Activated naive CD4-positive, alpha-beta T cell treated with anti-CD3 and anti-CD28 coated beads for 36 hours (primary cell): ENCODE measurements at regions of chr5 and their contacts with region 1.

Region 1: DNA sequence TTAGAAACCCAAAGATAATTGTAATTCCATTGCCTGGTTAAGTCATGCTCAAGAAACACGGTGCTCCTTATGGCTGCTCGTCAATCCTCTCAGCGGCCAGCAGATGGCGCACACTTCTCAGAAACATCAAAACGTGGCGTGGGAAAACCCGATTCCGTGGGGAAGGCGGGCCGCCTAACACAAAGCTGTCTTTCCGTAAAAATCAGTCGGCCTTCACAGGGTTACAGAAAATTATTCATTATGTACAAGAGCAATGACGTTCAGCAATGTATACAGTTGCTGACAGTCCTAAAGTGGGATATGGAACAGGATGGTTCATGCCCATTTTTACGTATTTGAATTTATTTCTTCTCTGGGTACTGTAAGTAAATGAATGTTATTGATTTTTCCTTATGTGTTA is 83.5 kb downstream of the PDE4D start:
- DNase-seq: peak; percentile 73
- H3K4me3 Mint-ChIP-seq: no peak overlapping the region
- H3K27ac Mint-ChIP-seq: no peak overlapping the region
- H3K4me1 Mint-ChIP-seq: no peaks in the 10 kb centered on the region
- H3K27me3 Mint-ChIP-seq: peaks cover 10% of the 10 kb centered on the region

Region 2: DNA sequence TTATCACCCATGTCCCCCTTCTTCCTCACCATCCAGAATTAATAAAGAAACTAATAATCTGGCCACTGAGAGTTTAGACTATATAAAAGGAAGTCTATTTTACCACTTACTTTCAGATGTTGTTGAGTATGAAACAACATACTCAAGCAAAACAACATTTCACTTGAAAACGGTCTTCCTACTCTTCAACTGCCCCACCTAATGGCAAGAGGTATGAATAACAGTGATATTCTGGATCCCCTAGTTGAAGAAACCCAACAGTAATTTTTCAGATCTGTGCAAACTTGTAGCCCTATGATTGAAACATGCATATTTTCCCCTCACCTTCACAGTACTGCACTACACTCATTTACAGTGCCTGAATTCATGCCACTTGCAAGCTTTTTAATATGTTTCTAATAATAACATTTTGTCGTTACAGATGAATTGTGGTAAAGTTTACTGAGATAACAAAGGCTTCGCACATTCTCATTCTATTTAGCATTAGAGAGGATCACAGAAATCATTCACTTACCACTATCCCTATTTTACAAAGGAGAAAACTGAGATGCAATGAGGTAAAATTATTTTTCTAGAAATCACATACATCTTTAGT is 351.4 kb after region 1 on chr5:
- CTCF ChIA-PET with region 1: interaction called, 3 read pairs
- intact Hi-C with region 1: loop called (anchors 1 kb)
- DNase-seq: no peak
- H3K4me3 Mint-ChIP-seq: no peak overlapping the region
- H3K27ac Mint-ChIP-seq: no peak overlapping the region
- H3K4me1 Mint-ChIP-seq: no peaks in the 10 kb centered on the region
- H3K27me3 Mint-ChIP-seq: no peaks in the 10 kb centered on the region

Region 3: GRCh38 chr5:60287174-60287771 is 477.2 kb after region 1 on chr5:
- CTCF ChIA-PET with region 1: no interaction called
- intact Hi-C with region 1: loop called (anchors 2 kb)
- DNase-seq: peak; percentile 14
- H3K4me3 Mint-ChIP-seq: no peak overlapping the region
- H3K27ac Mint-ChIP-seq: no peak overlapping the region
- H3K4me1 Mint-ChIP-seq: no peaks in the 10 kb centered on the region
- H3K27me3 Mint-ChIP-seq: no peaks in the 10 kb centered on the region

Region 4: GRCh38 chr5:60382716-60383115 is 572.7 kb after region 1 on chr5:
- CTCF ChIA-PET with region 1: no interaction called
- intact Hi-C with region 1: loop called (anchors 1 kb)
- DNase-seq: no peak
- H3K4me3 Mint-ChIP-seq: no peak overlapping the region
- H3K27ac Mint-ChIP-seq: no peak overlapping the region
- H3K4me1 Mint-ChIP-seq: no peaks in the 10 kb centered on the region
- H3K27me3 Mint-ChIP-seq: no peaks in the 10 kb centered on the region

Region 5: DNA sequence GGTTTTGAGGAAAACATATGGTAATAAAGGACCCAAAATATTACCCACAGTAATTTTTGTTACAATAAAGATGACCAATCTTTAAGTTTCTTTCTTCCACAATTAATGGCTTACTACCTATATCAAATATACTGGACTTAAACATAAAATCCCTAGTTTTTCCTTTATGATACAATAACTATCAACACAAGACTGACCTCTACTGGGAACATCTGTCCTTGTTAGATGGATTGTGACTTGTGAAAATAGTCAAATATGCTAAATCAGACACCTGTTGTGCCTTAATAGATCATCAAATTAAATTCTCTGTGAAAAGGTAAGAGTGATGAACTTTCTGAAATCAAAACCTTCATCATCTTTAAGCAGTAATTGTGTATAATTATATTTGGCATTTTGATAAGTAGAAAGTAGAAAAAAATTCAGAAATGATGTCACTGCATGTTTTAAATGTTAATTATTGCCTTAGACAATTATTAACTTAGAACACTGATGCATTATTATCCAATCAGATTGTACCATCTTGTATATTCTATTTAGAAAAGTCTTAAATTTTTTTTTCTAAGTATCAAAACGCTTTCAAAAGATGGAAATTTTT is 776.4 kb after region 1 on chr5:
- CTCF ChIA-PET with region 1: no interaction called
- intact Hi-C with region 1: loop called (anchors 5 kb)
- DNase-seq: no peak
- H3K4me3 Mint-ChIP-seq: no peak overlapping the region
- H3K27ac Mint-ChIP-seq: no peak overlapping the region
- H3K4me1 Mint-ChIP-seq: no peaks in the 10 kb centered on the region
- H3K27me3 Mint-ChIP-seq: peaks cover 6% of the 10 kb centered on the region

Region 6: GRCh38 chr5:60649283-60649917 is 839.4 kb after region 1 on chr5:
- CTCF ChIA-PET with region 1: no interaction called
- intact Hi-C with region 1: loop called (anchors 1 kb)
- DNase-seq: no peak
- H3K4me3 Mint-ChIP-seq: no peak overlapping the region
- H3K27ac Mint-ChIP-seq: no peak overlapping the region
- H3K4me1 Mint-ChIP-seq: no peaks in the 10 kb centered on the region
- H3K27me3 Mint-ChIP-seq: no peaks in the 10 kb centered on the region

Region 7: GRCh38 chr5:60668686-60669304 is 858.8 kb after region 1 on chr5:
- CTCF ChIA-PET with region 1: no interaction called
- intact Hi-C with region 1: loop called (anchors 1 kb)
- DNase-seq: no peak
- H3K4me3 Mint-ChIP-seq: no peak overlapping the region
- H3K27ac Mint-ChIP-seq: no peak overlapping the region
- H3K4me1 Mint-ChIP-seq: no peaks in the 10 kb centered on the region
- H3K27me3 Mint-ChIP-seq: no peaks in the 10 kb centered on the region